Endothelial cell of umbilical vein (primary cell): ENCODE measurements at regions of chr16 and their contacts with region 1.

Region 1: GRCh38 chr16:50756473-50756872 is 14.6 kb downstream of the CYLD start:
- DNase-seq: no peak
- H3K4me3 ChIP-seq: no peak overlapping the region
- H3K27ac ChIP-seq: no peak overlapping the region
- H3K4me1 ChIP-seq: no peaks in the 10 kb centered on the region
- H3K27me3 ChIP-seq: no peaks in the 10 kb centered on the region
- CTCF ChIP-seq: no peak
- POLR2A ChIP-seq: no peak

Region 2: GRCh38 chr16:50616883-50617645 is 139.4 kb before region 1 on chr16:
- CTCF ChIA-PET with region 1: no interaction called
- POLR2A ChIA-PET with region 1: interaction called, 12 read pairs
- dilution Hi-C with region 1: no loop called
- intact Hi-C with region 1: no loop called
- DNase-seq: no peak
- H3K4me3 ChIP-seq: no peak overlapping the region
- H3K27ac ChIP-seq: no peak overlapping the region
- H3K4me1 ChIP-seq: peaks cover 1% of the 10 kb centered on the region
- H3K27me3 ChIP-seq: no peaks in the 10 kb centered on the region
- CTCF ChIP-seq: no peak
- POLR2A ChIP-seq: no peak

Region 3: DNA sequence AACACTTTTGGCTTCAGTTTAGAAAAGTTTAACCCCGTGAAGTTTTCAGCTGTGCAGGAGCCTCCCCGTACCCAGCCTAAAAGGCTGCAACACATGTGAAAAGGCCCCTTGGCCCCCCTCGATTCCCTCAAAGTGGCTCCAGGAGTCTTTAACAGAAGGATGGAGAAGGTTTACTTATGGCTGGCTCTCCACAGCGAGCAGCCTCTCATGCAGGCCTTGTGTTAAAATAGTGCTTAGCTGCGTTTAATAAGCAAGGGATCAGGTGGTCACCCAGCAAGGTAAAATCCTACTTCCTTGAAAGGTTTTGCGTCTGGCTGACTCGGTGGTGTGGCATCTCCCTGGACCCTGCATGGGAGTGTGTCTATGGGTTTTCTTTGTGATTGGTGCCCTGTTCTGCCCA is 23.0 kb before region 1 on chr16:
- CTCF ChIA-PET with region 1: no interaction called
- POLR2A ChIA-PET with region 1: no interaction called
- dilution Hi-C with region 1: no loop called
- intact Hi-C with region 1: no loop called
- DNase-seq: no peak
- H3K4me3 ChIP-seq: no peak overlapping the region
- H3K27ac ChIP-seq: no peak overlapping the region
- H3K4me1 ChIP-seq: no peaks in the 10 kb centered on the region
- H3K27me3 ChIP-seq: peaks cover 2 to 3% of the 10 kb centered on the region in 2 experiments
- CTCF ChIP-seq: no peak
- POLR2A ChIP-seq: no peak

Region 4: DNA sequence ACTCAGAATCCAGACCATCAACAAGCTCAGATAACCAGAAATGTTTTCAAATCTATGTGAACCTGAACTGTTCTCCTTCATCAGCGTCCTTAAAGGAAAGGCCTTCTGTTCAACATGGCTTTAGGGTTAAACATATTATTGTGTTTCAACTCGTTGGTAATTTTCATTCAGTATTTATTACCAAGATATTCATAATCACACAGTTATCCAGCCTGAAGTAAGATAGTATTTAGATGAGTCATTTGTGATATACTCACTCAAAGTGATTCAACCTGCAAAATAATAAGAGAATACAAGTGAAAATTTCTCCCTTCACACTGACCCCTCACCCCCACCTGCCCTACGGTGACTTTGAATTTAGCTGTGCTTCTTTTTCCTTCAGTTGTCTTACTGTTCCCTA is 11.6 kb before region 1 on chr16:
- CTCF ChIA-PET with region 1: no interaction called
- POLR2A ChIA-PET with region 1: no interaction called
- dilution Hi-C with region 1: no loop called
- intact Hi-C with region 1: no loop called
- DNase-seq: peak; percentile 14
- H3K4me3 ChIP-seq: no peak overlapping the region
- H3K27ac ChIP-seq: no peak overlapping the region
- H3K4me1 ChIP-seq: peaks cover 11% of the 10 kb centered on the region
- H3K27me3 ChIP-seq: no peaks in the 10 kb centered on the region
- CTCF ChIP-seq: no peak
- POLR2A ChIP-seq: no peak